Posterior vena cava (tissue), 2 donors: ENCODE measurements at regions of chr13 and their contacts with region 1.

Region 1: DNA sequence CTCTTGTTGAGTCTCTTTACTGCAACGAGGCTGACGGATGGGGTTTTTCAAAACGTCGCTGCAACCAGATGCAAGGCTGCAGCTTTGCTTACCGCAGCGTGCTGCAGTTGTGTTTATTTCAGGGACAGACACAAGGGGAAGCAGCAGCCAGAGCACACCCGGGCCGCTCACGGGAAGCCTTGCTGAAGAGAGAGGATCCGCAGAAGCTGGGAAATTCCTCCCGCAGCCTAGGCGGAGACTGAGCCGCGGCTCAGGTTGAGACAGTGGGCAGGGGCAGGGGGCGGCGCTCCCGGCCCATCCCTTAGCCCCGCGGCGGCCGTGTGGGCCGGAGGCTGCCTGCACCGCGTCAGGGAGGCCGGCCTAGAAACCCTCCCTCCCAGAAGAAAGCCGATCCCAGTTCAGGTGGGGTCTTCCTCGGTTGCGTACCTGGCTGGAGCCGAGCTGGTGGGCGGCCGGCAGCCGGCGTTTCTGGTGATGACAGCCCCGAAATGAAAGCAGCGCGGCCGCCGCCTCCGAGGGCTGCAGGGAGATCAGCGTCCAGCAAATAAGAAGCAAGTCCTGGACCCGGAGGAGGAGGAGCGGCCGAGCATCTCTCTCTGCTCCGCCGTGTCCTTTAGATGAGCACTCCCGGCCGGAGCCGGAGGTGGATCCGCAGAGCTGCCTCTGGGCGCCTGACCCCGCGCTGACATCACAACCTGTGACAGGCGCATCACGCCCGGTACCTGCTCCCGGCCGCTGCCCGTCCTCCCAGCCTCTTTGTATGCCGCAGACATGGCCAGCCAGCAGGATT is at the start of gene FRY:
- DNase-seq: peak; percentile 91
- total RNA-seq, gene FRY: 97.1 to 207 TPM

Region 2: GRCh38 chr13:32117701-32118100 is 86.5 kb after region 1 on chr13:
- intact Hi-C with region 1: no loop called
- DNase-seq: no peak

Region 3: DNA sequence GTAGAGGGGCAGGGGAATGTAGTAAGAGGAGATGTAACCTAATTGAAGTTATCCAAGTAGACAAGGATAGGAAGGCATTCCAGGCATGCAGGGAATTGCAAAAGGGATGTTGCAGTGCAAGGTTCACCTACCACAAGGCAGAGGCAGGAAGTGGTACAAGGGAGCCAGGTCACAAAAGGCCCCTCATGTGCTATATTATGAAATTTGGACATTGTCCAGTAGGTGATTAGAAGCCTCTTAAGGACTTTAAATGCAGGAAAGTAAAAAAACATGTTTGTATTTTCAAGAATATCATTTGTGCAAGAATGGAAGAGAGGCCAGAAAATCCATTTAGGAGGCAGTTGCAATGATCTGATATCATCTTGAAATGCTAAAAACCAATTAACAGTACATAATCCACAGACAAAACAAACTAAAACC is 111.7 kb after region 1 on chr13:
- intact Hi-C with region 1: loop called in 1 of 2 experiments (anchors 10 kb)
- DNase-seq: no peak

Region 4: DNA sequence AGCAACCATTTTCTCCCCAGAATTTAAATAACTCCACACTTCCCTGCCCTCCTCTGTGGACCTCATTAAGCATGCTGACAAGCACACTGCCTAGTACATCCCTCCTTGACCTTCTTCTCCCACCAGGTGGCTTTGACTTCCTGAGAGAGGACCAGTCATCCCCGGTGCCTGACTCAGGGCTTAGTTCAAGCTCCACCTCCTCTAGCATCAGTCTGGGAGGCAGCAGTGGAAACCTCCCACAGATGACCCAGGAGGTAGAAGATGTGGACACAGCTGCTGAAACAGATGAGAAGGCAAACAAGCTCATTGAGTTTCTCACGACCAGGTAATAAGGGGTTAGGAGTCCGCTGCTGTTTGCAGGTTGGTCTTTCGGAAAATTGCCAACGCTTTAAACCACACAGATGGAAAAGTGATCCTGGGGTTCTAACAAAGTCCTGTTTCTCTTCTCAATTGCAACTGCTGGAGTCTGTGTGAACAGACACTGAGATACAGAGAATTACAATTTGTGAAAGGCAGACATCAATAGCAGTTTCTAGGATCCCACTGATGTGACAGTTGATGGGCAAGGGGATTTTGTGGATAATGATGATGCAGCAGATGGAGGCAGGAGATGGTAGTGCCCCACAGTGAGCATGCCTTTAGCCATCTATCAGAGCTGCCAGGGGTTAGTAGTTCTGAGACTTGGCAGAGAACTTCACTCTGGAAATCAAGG is 197.3 kb after region 1 on chr13:
- intact Hi-C with region 1: no loop called
- DNase-seq: no peak